ENCODE measurements at regions of chr14 and their contacts with region 1.

Region 1: DNA sequence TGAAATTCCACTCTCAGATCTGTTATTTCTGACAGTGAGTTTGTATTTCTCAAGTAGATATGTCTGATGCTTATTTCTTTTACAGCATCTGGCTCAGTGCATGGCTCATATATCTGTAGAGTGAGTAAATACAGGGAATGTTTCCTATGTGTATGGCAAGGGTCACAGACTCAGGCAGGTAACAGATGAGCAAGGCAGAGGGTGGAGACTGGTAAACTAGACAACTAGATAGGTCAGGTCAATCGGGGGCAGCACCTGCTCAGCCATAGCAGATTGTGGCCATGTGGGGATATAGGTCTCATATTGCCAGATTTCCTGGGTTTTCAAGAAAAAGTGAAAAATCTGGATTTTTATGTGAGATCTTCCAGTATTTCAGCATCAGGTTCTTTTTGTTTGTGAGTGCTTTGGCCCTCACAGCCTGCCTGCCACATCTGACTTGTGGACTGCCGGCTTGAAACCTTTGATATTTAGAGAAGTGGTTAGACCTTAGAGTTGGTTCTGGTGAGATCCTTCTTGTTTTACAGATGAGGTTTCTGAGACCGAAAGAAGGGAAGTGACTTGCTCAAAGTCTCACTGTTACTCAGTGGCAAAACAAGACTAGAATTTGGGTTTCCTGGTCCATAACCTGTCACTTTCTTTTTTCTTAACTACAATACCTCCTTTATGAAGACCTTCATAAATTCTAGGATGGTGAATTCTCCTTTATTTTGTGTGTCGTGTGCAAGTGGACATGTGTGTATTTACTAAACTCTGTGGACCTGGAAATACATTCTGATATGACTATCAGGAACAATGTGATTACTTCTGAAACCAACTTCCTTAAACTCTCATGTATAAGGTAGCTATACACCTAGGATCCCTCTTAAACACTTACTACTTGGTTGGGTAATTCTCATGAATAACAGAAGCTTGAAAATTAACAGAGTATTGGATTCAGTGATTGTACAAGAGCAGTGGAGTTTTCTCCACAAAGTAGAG is 34.4 kb downstream of the PROX2 start:
- DNase-seq: peak; percentile 46
- H3K4me3 Mint-ChIP-seq: no peak overlapping the region
- H3K27ac Mint-ChIP-seq: peak overlapping the region; percentile 54
- H3K4me1 Mint-ChIP-seq: peaks cover 54% of the 10 kb centered on the region
- H3K27me3 Mint-ChIP-seq: no peaks in the 10 kb centered on the region

Region 2: DNA sequence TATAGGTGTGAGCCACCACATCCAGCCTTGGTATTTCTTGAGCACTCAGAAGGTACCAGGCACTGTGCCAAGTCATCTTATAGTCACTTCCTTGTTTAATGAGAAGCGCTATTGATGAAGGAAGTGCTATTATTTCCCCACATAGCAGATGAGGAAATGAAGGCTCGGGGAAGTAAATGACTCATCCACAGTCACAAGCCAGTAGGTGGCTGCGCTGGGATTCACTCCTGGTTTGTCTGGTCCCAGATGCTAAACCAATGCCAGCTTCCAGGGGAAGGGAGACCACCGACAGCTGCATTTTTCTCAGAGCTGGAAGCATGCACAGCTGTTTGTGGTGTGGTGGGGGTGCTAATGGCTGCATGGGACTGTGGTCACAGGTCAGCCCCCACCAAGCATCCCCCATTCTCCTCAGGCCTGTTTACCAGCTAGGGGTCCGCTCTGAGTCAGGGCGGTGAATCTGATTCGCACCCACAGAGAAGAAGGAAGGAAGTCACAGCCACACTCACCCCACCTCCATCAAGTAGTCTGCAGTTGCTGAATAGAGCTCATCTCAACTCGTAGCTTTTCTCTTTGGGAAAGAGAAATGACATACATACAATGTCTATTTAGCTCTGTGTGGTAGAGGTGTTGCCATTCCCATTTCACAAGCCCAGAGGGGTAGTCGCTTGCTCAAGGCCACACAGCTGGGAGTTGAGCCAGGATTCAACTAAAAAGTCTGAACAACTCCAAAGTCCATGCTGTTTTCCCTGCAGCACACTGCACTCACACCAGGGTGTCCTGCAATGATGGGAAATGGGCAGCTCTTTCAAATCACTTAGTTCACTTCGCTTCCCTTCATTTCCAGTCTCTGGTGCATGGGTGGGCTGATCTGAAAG is 223.2 kb before region 1 on chr14:
- CTCF ChIA-PET with region 1: no interaction called
- intact Hi-C with region 1: loop called (anchors 2 kb)
- DNase-seq: peak; percentile 89
- H3K4me3 Mint-ChIP-seq: no peak overlapping the region
- H3K27ac Mint-ChIP-seq: peak overlapping the region; percentile 63
- H3K4me1 Mint-ChIP-seq: peaks cover 62% of the 10 kb centered on the region
- H3K27me3 Mint-ChIP-seq: peaks cover 4% of the 10 kb centered on the region

Region 3: GRCh38 chr14:74712499-74713394 is 128.8 kb before region 1 on chr14 and contains the starts of genes AREL1 and FCF1:
- CTCF ChIA-PET with region 1: no interaction called
- intact Hi-C with region 1: loop called (anchors 5 kb)
- DNase-seq: peak; percentile 93
- H3K4me3 Mint-ChIP-seq: peak within 1 kb of the TSS; percentile 97
- H3K27ac Mint-ChIP-seq: peak within 1 kb of the TSS; percentile 90
- H3K4me1 Mint-ChIP-seq: peaks cover 47% of the 10 kb centered on the region
- H3K27me3 Mint-ChIP-seq: no peaks in the 10 kb centered on the region
- total RNA-seq, gene AREL1: 29.1 to 29.5 TPM
- total RNA-seq, gene FCF1: 83.8 to 87.5 TPM

Region 4: DNA sequence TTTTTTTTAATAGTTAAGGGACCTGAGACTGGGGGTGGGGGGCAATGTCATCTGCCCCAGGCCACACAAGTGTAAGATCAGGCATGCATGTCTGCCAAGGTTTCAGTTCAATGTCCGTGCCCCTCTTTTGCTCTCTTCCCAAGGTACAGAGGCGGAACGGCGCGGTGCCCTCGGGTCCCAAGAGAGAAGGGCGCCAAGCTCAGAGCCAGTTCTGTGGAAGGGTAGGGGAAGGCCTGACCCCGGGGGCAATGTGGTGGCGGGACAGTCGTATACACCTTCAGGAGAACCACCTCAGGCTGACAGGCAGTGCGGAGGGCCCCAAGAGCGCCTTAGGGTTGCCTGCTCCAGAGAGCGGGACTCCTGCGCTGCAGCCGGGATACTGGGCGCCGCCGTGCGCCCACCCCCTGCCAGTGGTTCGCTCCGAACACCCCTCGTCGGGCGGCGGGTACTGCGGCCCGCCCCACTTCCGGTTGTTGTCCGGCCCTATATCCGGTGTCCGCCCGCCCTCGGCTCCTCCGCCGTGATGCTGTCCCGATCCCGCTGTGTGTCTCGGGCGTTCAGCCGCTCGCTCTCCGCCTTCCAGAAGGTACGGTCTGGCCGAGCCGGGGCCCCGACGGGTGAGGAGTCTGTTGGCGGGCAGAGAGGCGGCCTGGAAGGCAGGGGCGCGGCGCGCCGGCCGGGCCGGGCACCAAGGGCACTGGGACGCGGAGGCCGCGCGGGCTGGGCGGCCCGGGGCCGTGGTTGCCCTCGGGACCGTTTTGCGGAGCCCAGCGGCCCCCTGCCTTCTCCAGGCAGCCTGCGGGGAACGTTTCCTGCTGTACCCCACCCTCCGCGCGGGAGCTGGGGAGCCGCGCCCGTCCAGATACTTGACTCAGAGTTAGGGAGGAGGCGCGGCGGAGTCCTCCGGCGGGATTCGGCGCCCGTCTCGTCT is 40.2 kb after region 1 on chr14 and contains the start of gene DLST:
- CTCF ChIA-PET with region 1: no interaction called
- intact Hi-C with region 1: loop called (anchors 1 kb)
- DNase-seq: peak; percentile 87
- H3K4me3 Mint-ChIP-seq: peak within 1 kb of the TSS; percentile 91
- H3K27ac Mint-ChIP-seq: peak within 1 kb of the TSS; percentile 94
- H3K4me1 Mint-ChIP-seq: peaks cover 63% of the 10 kb centered on the region
- H3K27me3 Mint-ChIP-seq: no peaks in the 10 kb centered on the region
- total RNA-seq, gene DLST: 126 to 132 TPM

Region 5: GRCh38 chr14:75063407-75064213 is 222.1 kb after region 1 on chr14 and contains the start of gene ACYP1:
- CTCF ChIA-PET with region 1: no interaction called
- intact Hi-C with region 1: loop called (anchors 5 kb)
- DNase-seq: peak; percentile 96
- H3K4me3 Mint-ChIP-seq: peak within 1 kb of the TSS; percentile 99
- H3K27ac Mint-ChIP-seq: peak within 1 kb of the TSS; percentile 94
- H3K4me1 Mint-ChIP-seq: peaks cover 23% of the 10 kb centered on the region
- H3K27me3 Mint-ChIP-seq: no peaks in the 10 kb centered on the region
- total RNA-seq, gene ACYP1: 46.3 to 50.5 TPM

Region 6: DNA sequence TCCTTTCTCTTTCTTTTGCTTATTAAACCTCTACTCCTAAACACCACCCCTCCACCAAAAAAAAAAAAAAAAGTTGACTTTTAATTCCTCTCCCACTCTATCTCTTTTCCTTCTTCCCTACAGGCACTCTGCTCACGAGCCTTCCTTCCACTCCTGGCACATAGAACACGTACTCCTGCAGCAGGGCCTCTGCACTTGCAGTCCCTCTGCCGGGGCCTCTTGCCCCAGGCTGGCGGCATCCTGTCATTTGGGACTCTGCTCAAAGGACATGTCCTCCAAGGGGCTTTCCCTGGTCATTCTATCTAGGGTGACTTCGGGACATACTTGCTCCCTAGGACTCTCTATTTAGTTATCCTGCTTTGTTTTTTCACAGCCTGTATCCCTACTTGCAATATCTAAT is 444.8 kb after region 1 on chr14:
- CTCF ChIA-PET with region 1: no interaction called
- intact Hi-C with region 1: loop called (anchors 5 kb)
- DNase-seq: no peak
- H3K4me3 Mint-ChIP-seq: no peak overlapping the region
- H3K27ac Mint-ChIP-seq: no peak overlapping the region
- H3K4me1 Mint-ChIP-seq: peaks cover under 1% of the 10 kb centered on the region
- H3K27me3 Mint-ChIP-seq: peaks cover 3% of the 10 kb centered on the region